ENCODE measurements at regions of chr5 and their contacts with region 1.

Region 1: GRCh38 chr5:76413746-76414145 is 10.7 kb downstream of the IQGAP2 start:
- DNase-seq: no peak
- ATAC-seq: no peak
- H3K4me3 ChIP-seq: no peak overlapping the region
- H3K27ac ChIP-seq: no peak overlapping the region
- H3K4me1 ChIP-seq: no peaks in the 10 kb centered on the region
- H3K27me3 ChIP-seq: no peaks in the 10 kb centered on the region
- CTCF ChIP-seq: no peak
- POLR2A ChIP-seq: no peak

Region 2: DNA sequence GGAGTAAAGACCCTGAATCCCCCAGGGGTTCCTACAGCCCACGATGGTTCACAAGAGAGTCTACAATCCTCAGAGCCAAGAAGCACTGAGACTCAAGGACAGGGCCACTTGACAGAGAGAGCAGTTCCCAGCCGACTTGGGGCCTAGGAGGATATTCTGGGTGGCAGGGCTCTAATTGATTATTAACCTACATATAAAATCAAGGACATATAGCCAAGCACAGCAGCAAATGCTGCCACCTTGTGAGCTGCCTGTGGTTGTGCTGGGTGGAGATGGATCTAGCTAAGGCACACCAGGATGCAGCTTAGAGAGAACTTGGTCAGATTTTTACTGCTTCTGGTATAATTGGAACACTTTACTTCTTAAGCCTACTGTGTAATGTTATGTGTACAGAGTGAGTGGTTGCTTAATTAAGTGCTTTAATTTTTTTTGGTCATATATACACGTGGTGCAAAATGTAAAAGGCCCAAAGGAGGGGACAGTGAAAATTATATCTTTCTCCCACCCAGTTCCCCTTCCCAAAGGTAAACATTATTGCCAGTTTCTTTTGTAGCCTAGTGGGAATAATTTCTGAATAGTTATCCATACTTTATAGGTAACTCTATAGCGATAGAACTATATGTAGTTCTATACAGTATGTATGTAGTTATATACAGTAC is 130.7 kb after region 1 on chr5:
- intact Hi-C with region 1: loop called in 1 of 10 experiments (anchors 5 kb)
- DNase-seq: no peak
- ATAC-seq: peak in 2 of 4 donors; percentile 33
- H3K4me3 ChIP-seq: no peak overlapping the region
- H3K27ac ChIP-seq: peak overlapping the region in 1 of 12 donors; percentile 83
- H3K4me1 ChIP-seq: peaks cover 0 to 70% (median 0%) of the 10 kb centered on the region in 12 donors
- H3K27me3 ChIP-seq: no peaks in the 10 kb centered on the region
- CTCF ChIP-seq: peak in 6 of 12 donors; percentile 9 to 41 (median 21)
- POLR2A ChIP-seq: no peak

Region 3: DNA sequence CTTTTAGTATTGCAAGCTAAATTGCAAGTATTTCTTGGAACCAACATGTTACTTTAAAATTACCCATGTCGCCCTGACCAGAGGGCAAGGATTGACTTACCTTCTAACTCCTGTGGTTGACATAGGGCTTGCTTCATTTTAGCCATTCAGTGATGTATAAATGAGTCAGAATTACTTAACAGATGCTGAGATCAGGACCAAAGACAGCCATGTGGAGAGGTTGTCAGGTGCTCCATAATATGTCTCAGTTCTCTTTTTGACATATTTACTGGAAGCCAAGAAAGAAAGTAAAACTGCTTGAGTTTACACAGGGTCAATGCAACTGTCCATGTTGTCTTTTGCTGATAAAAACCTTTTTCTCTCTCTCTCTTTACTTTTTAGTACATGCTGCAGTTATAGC is 176.3 kb after region 1 on chr5:
- intact Hi-C with region 1: loop called in 2 of 10 experiments (anchors 10 kb)
- DNase-seq: no peak
- ATAC-seq: no peak
- H3K4me3 ChIP-seq: no peak overlapping the region
- H3K27ac ChIP-seq: no peak overlapping the region
- H3K4me1 ChIP-seq: no peaks in the 10 kb centered on the region
- H3K27me3 ChIP-seq: peaks cover 0 to 6% (median 0%) of the 10 kb centered on the region in 9 donors
- CTCF ChIP-seq: no peak
- POLR2A ChIP-seq: no peak

Measured in heart left ventricle (tissue), 16 donors.